ENCODE measurements at regions of chr13 and their contacts with region 1.

Region 1: GRCh38 chr13:94362411-94362909 is 117.0 kb downstream of the DCT start:
- DNase-seq: peak; percentile 95
- ATAC-seq: peak; percentile 100
- H3K4me3 ChIP-seq: no peak overlapping the region
- H3K27ac ChIP-seq: no peak overlapping the region
- H3K4me1 ChIP-seq: no peaks in the 10 kb centered on the region
- H3K27me3 ChIP-seq: no peaks in the 10 kb centered on the region
- CTCF ChIP-seq: peak; percentile 94
- POLR2A ChIP-seq: no peak
- RAD21 ChIP-seq: peak; percentile 99

Region 2: GRCh38 chr13:92716749-92717148 is 1645.7 kb before region 1 on chr13:
- CTCF ChIA-PET with region 1: interaction called, 3 read pairs
- POLR2A ChIA-PET with region 1: no interaction called
- dilution Hi-C with region 1: no loop called
- in situ Hi-C with region 1: loop called (anchors 10 kb)
- intact Hi-C with region 1: loop called (anchors 5 kb)
- DNase-seq: peak; percentile 19
- ATAC-seq: peak; percentile 85
- H3K4me3 ChIP-seq: no peak overlapping the region
- H3K27ac ChIP-seq: no peak overlapping the region
- H3K4me1 ChIP-seq: no peaks in the 10 kb centered on the region
- H3K27me3 ChIP-seq: no peaks in the 10 kb centered on the region
- CTCF ChIP-seq: peak; percentile 60
- POLR2A ChIP-seq: no peak
- RAD21 ChIP-seq: peak; percentile 65

Region 3: GRCh38 chr13:92974905-92975429 is 1387.5 kb before region 1 on chr13:
- CTCF ChIA-PET with region 1: no interaction called
- POLR2A ChIA-PET with region 1: no interaction called
- dilution Hi-C with region 1: no loop called
- in situ Hi-C with region 1: no loop called
- intact Hi-C with region 1: loop called (anchors 5 kb)
- DNase-seq: no peak
- ATAC-seq: no peak
- H3K4me3 ChIP-seq: no peak overlapping the region
- H3K27ac ChIP-seq: no peak overlapping the region
- H3K4me1 ChIP-seq: no peaks in the 10 kb centered on the region
- H3K27me3 ChIP-seq: no peaks in the 10 kb centered on the region
- CTCF ChIP-seq: no peak
- POLR2A ChIP-seq: no peak
- RAD21 ChIP-seq: no peak

Region 4: DNA sequence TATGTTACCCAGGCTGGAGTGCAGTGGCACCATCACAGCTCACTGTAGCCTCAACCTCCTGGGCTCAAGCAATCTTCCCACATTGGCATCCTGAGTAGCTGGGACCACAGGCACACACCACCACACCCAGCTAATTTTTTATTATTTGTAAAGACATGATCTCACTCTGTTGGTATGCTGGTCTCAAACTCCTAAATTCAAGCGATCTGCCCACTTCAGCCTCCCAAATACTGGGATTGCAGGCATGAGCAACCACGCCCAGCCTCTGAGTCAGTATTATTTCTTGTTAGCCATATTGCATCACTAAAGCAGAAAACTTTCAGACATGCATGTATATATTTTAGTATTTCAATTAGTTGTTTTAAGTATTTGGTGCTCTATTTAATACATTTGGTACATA is 759.4 kb before region 1 on chr13:
- CTCF ChIA-PET with region 1: no interaction called
- POLR2A ChIA-PET with region 1: no interaction called
- dilution Hi-C with region 1: no loop called
- in situ Hi-C with region 1: no loop called
- intact Hi-C with region 1: loop called (anchors 1 kb)
- DNase-seq: peak; percentile 82
- ATAC-seq: peak; percentile 93
- H3K4me3 ChIP-seq: no peak overlapping the region
- H3K27ac ChIP-seq: no peak overlapping the region
- H3K4me1 ChIP-seq: peaks cover 3% of the 10 kb centered on the region
- H3K27me3 ChIP-seq: no peaks in the 10 kb centered on the region
- CTCF ChIP-seq: no peak
- POLR2A ChIP-seq: no peak
- RAD21 ChIP-seq: no peak

Region 5: DNA sequence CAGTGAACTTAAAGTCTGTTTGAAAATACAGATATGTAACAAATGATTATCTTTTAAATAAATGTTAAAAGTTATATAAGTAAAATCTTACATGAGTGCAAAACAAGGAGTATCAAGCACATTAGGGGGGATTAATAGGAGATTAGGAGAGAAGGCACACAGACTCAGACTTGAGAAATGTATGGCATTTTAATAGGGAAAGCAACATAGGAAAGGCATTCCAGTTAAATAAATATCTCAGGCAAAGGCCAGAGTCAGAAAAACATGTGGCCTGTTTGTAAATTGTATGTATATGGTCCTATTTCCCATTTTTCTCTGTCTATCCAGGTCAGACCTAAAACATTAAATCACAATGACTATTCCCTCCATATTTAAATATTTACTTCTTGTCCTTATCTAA is 673.1 kb before region 1 on chr13:
- CTCF ChIA-PET with region 1: no interaction called
- POLR2A ChIA-PET with region 1: no interaction called
- dilution Hi-C with region 1: no loop called
- in situ Hi-C with region 1: no loop called
- intact Hi-C with region 1: loop called (anchors 10 kb)
- DNase-seq: peak; percentile 65
- ATAC-seq: peak; percentile 87
- H3K4me3 ChIP-seq: no peak overlapping the region
- H3K27ac ChIP-seq: no peak overlapping the region
- H3K4me1 ChIP-seq: no peaks in the 10 kb centered on the region
- H3K27me3 ChIP-seq: no peaks in the 10 kb centered on the region
- CTCF ChIP-seq: no peak
- POLR2A ChIP-seq: no peak
- RAD21 ChIP-seq: no peak

Region 6: DNA sequence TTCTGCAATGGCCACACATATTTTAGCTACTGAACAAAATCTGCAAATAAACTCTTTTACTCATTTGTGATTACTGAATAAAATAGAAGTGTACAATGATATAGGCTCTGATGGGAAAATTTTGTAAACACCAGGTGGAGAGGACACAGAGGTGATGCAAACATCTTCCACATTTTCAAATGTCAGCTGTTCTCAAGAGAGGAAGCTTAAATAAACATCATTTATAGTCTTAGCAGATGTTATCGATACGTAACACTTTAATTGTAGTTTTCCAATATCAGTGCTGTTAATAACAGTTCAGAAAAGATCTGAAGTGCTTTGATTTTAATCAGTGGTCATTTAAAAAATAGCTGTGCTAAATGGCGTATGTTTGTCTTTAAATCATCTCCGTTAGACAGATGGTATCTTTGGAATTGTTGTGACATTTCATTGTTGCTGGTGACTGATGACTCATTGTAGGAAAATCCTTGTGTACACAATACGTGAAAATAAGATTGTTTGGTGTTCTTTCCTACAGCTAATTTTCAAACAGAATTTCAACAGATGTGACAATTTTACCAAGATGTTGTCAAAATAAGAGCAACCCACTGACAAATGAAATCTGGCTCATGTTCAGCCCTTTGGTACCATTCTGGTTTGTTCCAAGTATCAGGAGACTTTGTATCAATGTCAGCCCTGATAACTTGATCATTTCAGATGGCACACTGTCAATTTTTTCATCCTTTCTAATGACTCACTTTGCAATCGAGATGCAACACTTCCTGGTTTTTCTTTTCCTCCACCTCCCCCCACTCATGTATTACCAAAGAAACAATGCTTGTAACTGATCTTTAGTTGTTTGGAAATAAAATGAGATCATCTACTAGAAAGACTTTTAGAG is 399.0 kb before region 1 on chr13:
- CTCF ChIA-PET with region 1: no interaction called
- POLR2A ChIA-PET with region 1: no interaction called
- dilution Hi-C with region 1: no loop called
- in situ Hi-C with region 1: no loop called
- intact Hi-C with region 1: loop called (anchors 5 kb)
- DNase-seq: peak; percentile 61
- ATAC-seq: no peak
- H3K4me3 ChIP-seq: no peak overlapping the region
- H3K27ac ChIP-seq: no peak overlapping the region
- H3K4me1 ChIP-seq: peaks cover 1% of the 10 kb centered on the region; the same call in 1 of the 2 replicates
- H3K27me3 ChIP-seq: no peaks in the 10 kb centered on the region
- CTCF ChIP-seq: no peak
- POLR2A ChIP-seq: no peak
- RAD21 ChIP-seq: no peak

Region 7: DNA sequence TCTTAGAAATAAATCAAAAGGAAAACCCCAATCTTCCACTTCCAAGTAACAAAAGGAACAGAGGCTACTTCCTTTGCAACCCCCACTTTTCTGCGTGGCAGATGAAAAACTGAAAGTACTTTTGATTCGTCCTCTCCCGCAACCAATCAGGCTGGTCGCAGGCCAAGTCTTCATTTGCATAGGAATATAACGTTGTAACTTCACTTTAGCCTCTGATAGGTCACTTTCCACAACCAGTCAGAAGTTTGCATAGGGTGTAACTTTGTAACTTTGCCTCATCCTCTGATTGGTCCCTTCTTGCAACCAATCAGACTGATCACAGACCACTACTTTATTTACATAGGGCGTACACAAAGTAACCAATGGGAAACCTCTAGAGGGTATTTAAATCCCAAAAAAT is 196.3 kb after region 1 on chr13:
- CTCF ChIA-PET with region 1: no interaction called
- POLR2A ChIA-PET with region 1: no interaction called
- dilution Hi-C with region 1: no loop called
- in situ Hi-C with region 1: no loop called
- intact Hi-C with region 1: no loop called
- DNase-seq: no peak
- ATAC-seq: no peak
- H3K4me3 ChIP-seq: no peak overlapping the region
- H3K27ac ChIP-seq: no peak overlapping the region
- H3K4me1 ChIP-seq: no peaks in the 10 kb centered on the region
- H3K27me3 ChIP-seq: no peaks in the 10 kb centered on the region
- CTCF ChIP-seq: no peak
- POLR2A ChIP-seq: no peak
- RAD21 ChIP-seq: no peak

Measured in IMR-90 (cell line).